Activated CD4-positive, alpha-beta memory T cell treated with anti-CD3 and anti-CD28 coated beads for 36 hours (primary cell): ENCODE measurements at regions of chr19 and their contacts with region 1.

Region 1: GRCh38 chr19:34171877-34172660 is at the start of gene LSM14A:
- DNase-seq: peak; percentile 93
- H3K4me3 Mint-ChIP-seq: peak within 1 kb of the TSS; percentile 92
- H3K27ac Mint-ChIP-seq: peak within 1 kb of the TSS; percentile 99
- H3K4me1 Mint-ChIP-seq: peaks cover 36% of the 10 kb centered on the region
- H3K27me3 Mint-ChIP-seq: no peaks in the 10 kb centered on the region
- total RNA-seq, gene LSM14A: 90.0 to 106 TPM

Region 2: GRCh38 chr19:34134190-34135053 is 37.6 kb before region 1 on chr19:
- CTCF ChIA-PET with region 1: interaction called, 3 read pairs
- POLR2A ChIA-PET with region 1: interaction called, 12 read pairs
- intact Hi-C with region 1: loop called (anchors 1 kb)
- DNase-seq: peak; percentile 91
- H3K4me3 Mint-ChIP-seq: peak overlapping the region; percentile 87
- H3K27ac Mint-ChIP-seq: peak overlapping the region; percentile 90
- H3K4me1 Mint-ChIP-seq: peaks cover 10% of the 10 kb centered on the region
- H3K27me3 Mint-ChIP-seq: no peaks in the 10 kb centered on the region

Region 3: DNA sequence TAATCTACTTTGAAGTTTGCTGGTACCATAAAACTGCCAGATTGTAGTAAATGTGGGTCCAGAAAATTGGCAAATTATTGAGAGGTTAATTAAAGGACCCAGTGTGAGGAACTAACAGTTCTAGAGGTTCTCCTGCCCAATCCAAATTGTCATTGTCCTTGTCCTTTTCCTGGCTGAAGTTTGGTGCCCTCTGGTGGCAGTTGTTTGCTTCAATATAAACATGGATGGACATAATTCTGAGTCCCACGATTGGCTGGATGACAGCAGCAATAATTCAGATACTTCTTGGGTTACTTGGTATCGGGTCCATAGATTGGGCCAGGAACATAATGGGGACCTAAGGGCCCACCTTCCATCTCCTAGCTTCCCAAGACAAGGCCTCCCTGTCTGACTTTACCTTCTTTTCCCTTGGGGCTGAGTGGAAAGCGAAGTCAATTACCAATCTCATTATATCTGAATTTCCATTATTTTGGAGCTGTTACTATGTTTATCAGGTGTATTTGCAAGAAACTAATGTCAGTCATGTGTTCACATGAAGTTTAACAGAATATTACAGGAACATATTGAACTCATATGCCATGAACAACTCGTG is 48.5 kb after region 1 on chr19:
- CTCF ChIA-PET with region 1: interaction called, 9 read pairs
- POLR2A ChIA-PET with region 1: interaction called, 5 read pairs
- intact Hi-C with region 1: loop called (anchors 1 kb)
- DNase-seq: peak; percentile 69
- H3K4me3 Mint-ChIP-seq: no peak overlapping the region
- H3K27ac Mint-ChIP-seq: no peak overlapping the region
- H3K4me1 Mint-ChIP-seq: peaks cover 48% of the 10 kb centered on the region
- H3K27me3 Mint-ChIP-seq: no peaks in the 10 kb centered on the region

Region 4: GRCh38 chr19:34232566-34233481 is 60.8 kb after region 1 on chr19:
- CTCF ChIA-PET with region 1: no interaction called
- POLR2A ChIA-PET with region 1: interaction called, 10 read pairs
- intact Hi-C with region 1: no loop called
- DNase-seq: peak; percentile 56
- H3K4me3 Mint-ChIP-seq: no peak overlapping the region
- H3K27ac Mint-ChIP-seq: peak overlapping the region; percentile 84
- H3K4me1 Mint-ChIP-seq: peaks cover 32% of the 10 kb centered on the region
- H3K27me3 Mint-ChIP-seq: no peaks in the 10 kb centered on the region

Region 5: GRCh38 chr19:34244611-34245299 is 72.7 kb after region 1 on chr19:
- CTCF ChIA-PET with region 1: no interaction called
- POLR2A ChIA-PET with region 1: no interaction called
- intact Hi-C with region 1: no loop called
- DNase-seq: no peak
- H3K4me3 Mint-ChIP-seq: no peak overlapping the region
- H3K27ac Mint-ChIP-seq: no peak overlapping the region
- H3K4me1 Mint-ChIP-seq: no peaks in the 10 kb centered on the region
- H3K27me3 Mint-ChIP-seq: no peaks in the 10 kb centered on the region

Region 6: DNA sequence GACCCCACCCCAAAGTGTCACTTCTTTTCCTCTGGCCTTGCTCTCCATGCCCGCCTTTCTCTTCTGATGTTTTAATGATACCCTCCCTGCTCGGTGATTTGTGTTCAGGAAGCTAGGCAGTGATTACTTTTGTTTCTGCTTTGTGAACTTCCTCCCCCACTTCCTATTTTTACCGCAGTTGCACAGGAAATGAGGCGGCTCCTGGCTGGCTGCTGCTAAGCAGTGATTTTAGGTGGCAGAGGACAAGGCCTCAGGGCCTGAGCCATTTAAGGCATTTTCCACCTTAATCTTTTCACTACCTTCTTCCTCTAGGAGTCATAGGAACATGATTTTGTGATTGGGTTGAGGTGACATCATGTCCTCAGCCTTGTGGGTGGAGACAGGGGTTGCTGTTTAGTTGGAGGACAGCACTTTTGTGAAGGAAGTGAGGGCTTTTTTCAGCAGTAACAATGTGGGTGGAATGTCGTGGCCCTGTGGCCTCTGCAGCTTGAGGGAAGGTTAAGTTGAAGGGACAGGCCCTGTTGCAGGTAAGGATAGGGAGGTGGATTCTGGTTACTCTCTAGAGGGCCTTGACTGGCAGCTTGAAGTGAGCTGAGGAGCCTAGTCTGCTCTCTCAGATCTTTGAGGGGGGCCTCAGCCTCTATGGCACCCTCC is 98.0 kb after region 1 on chr19:
- CTCF ChIA-PET with region 1: no interaction called
- POLR2A ChIA-PET with region 1: interaction called, 3 read pairs
- intact Hi-C with region 1: loop called (anchors 5 kb)
- DNase-seq: peak; percentile 85
- H3K4me3 Mint-ChIP-seq: peak overlapping the region; percentile 58
- H3K27ac Mint-ChIP-seq: peak overlapping the region; percentile 96
- H3K4me1 Mint-ChIP-seq: peaks cover 60% of the 10 kb centered on the region
- H3K27me3 Mint-ChIP-seq: no peaks in the 10 kb centered on the region

Region 7: GRCh38 chr19:34351382-34351826 is 179.3 kb after region 1 on chr19:
- CTCF ChIA-PET with region 1: interaction called, 3 read pairs
- POLR2A ChIA-PET with region 1: no interaction called
- intact Hi-C with region 1: loop called (anchors 5 kb)
- DNase-seq: peak; percentile 38
- H3K4me3 Mint-ChIP-seq: peak overlapping the region; percentile 37
- H3K27ac Mint-ChIP-seq: peak overlapping the region; percentile 92
- H3K4me1 Mint-ChIP-seq: peaks cover 19% of the 10 kb centered on the region
- H3K27me3 Mint-ChIP-seq: no peaks in the 10 kb centered on the region

Region 8: GRCh38 chr19:34430738-34431625 is 258.9 kb after region 1 on chr19:
- CTCF ChIA-PET with region 1: no interaction called
- POLR2A ChIA-PET with region 1: no interaction called
- intact Hi-C with region 1: loop called (anchors 5 kb)
- DNase-seq: peak; percentile 42
- H3K4me3 Mint-ChIP-seq: peak overlapping the region; percentile 98
- H3K27ac Mint-ChIP-seq: peak overlapping the region; percentile 95
- H3K4me1 Mint-ChIP-seq: peaks cover 42% of the 10 kb centered on the region
- H3K27me3 Mint-ChIP-seq: no peaks in the 10 kb centered on the region